Activated CD4-positive, alpha-beta memory T cell treated with anti-CD3 and anti-CD28 coated beads, Interleukin-2, amount 10 ng/mL, durations not matched to agents 7 days and 5 days (primary cell): ENCODE measurements at regions of chr14 and their contacts with region 1.

Region 1: DNA sequence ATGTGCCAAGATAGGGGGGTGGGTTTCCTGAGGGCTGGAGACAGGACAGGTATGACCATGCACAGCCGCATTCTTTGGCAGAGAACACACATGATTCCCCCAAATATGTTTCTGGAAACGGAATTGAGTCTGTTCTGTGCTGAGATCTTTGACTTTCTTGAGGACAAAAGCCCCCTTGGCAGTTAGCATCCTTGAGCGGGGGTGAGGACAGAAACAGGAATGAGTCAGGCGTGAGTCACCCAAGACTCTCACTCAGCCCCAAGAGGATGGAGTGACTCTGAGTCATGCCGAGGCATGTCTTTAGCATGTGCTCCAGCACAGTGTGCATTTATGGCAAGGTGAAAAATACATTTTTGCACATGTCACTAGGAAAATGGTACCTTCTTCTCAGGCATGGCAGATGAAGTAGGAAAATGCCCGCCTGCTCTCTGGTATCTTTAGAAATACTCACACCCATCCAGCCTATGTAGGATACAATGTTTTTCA is 52.1 kb downstream of the DAD1 start:
- DNase-seq: peak; percentile 84
- H3K4me3 Mint-ChIP-seq: peak overlapping the region; percentile 69
- H3K27ac Mint-ChIP-seq: peak overlapping the region; percentile 87
- H3K4me1 Mint-ChIP-seq: peaks cover 95% of the 10 kb centered on the region
- H3K27me3 Mint-ChIP-seq: no peaks in the 10 kb centered on the region

Region 2: DNA sequence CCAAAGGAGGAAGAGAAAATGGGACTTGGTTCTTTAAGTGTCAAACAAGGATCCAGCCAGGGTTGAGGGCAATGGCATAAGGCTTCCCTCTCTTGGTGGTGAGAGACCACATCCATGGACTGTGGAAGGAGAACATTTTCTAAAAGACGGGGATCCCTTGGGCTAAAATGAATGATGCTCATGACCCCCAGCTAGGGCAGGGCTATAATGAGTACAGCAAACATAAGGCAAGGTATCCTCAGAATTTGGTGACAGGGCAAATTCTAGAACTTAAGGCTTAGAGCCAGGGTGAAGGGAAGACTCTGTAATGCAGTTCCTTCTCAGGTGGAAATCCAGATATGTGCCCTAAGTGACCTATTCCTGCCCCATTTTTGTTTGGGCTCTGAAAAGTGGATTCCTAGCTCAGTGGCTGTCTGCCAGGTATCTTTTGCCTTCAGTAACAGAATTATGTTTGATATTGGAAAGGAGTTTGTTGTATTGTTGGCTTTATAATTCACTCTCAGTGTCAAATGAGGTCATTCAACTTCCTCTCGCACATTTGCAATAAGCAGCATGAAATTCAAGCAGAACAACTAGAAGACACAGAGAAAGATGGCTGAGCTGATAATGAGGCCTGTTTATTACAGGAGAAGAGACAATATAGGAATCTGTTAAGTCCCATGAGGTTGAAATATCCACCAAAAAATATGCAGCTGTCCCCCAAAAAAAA is 24.6 kb before region 1 on chr14:
- CTCF ChIA-PET with region 1: interaction called, 3 read pairs
- POLR2A ChIA-PET with region 1: interaction called, 707 read pairs
- DNase-seq: no peak
- H3K4me3 Mint-ChIP-seq: peak overlapping the region; percentile 83
- H3K27ac Mint-ChIP-seq: peak overlapping the region; percentile 90
- H3K4me1 Mint-ChIP-seq: peaks cover 92% of the 10 kb centered on the region
- H3K27me3 Mint-ChIP-seq: no peaks in the 10 kb centered on the region

Region 3: GRCh38 chr14:22519877-22520685 is 16.8 kb before region 1 on chr14:
- CTCF ChIA-PET with region 1: interaction called, 10 read pairs
- POLR2A ChIA-PET with region 1: interaction called, 707 read pairs
- DNase-seq: no peak
- H3K4me3 Mint-ChIP-seq: peak overlapping the region; percentile 78
- H3K27ac Mint-ChIP-seq: peak overlapping the region; percentile 91
- H3K4me1 Mint-ChIP-seq: peaks cover 96% of the 10 kb centered on the region
- H3K27me3 Mint-ChIP-seq: no peaks in the 10 kb centered on the region

Region 4: GRCh38 chr14:22549981-22550673 is 13.2 kb after region 1 on chr14:
- CTCF ChIA-PET with region 1: interaction called, 55 read pairs
- POLR2A ChIA-PET with region 1: interaction called, 630 read pairs
- DNase-seq: peak; percentile 79
- H3K4me3 Mint-ChIP-seq: peak overlapping the region; percentile 69
- H3K27ac Mint-ChIP-seq: peak overlapping the region; percentile 97
- H3K4me1 Mint-ChIP-seq: peaks cover 93% of the 10 kb centered on the region
- H3K27me3 Mint-ChIP-seq: no peaks in the 10 kb centered on the region